Activated naive CD4-positive, alpha-beta T cell treated with anti-CD3 and anti-CD28 coated beads for 36 hours (primary cell): ENCODE measurements at regions of chr7 and their contacts with region 1.

Region 1: DNA sequence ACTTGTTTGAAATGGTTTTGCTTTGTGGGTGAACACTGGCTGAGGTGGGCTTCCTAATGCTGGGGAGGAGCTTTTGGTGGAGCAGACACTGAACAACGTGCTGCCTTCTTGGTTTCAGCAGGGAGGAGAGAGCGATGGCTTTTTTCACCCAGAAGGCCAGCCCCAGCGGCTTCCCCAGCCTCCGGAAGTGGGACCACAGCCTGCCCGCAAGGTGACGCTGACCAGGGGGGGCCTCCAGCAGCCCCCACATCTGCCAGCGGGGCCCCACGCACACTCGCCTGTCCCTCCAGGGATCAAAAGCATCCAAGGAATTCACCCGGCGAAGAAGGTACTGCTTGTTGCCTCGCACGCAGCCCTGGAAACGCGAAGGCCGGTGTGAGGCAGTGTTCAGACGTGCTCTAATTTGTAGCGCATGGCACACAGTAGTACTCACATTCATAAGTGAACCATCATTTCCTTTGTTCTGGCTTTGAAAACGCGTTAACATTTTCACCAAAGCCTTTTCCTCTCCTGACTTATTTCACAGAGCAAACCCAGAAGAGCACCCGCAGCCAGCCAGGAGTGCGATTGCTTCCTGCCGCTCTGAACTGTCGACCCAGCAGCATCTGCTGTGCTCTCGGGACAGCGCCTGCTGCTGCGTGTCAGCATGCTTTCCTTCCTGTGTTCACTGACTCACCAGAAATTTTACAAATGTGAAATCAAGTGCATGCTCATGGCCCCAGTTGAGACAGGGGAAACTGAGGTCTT is 48.4 kb downstream of the SHH start:
- DNase-seq: peak; percentile 82
- H3K4me3 Mint-ChIP-seq: peak overlapping the region; percentile 70
- H3K27ac Mint-ChIP-seq: peak overlapping the region; percentile 95
- H3K4me1 Mint-ChIP-seq: peaks cover 42% of the 10 kb centered on the region
- H3K27me3 Mint-ChIP-seq: no peaks in the 10 kb centered on the region

Region 2: GRCh38 chr7:155729834-155730233 is 34.0 kb before region 1 on chr7:
- CTCF ChIA-PET with region 1: interaction called, 12 read pairs
- intact Hi-C with region 1: loop called (anchors 1 kb)
- DNase-seq: no peak
- H3K4me3 Mint-ChIP-seq: no peak overlapping the region
- H3K27ac Mint-ChIP-seq: no peak overlapping the region
- H3K4me1 Mint-ChIP-seq: peaks cover 52% of the 10 kb centered on the region
- H3K27me3 Mint-ChIP-seq: no peaks in the 10 kb centered on the region

Region 3: GRCh38 chr7:155746188-155746587 is 17.7 kb before region 1 on chr7:
- CTCF ChIA-PET with region 1: interaction called, 6 read pairs
- intact Hi-C with region 1: loop called (anchors 2 kb)
- DNase-seq: no peak
- H3K4me3 Mint-ChIP-seq: no peak overlapping the region
- H3K27ac Mint-ChIP-seq: no peak overlapping the region
- H3K4me1 Mint-ChIP-seq: peaks cover 53% of the 10 kb centered on the region
- H3K27me3 Mint-ChIP-seq: no peaks in the 10 kb centered on the region